ENCODE measurements at regions of chr11 and their contacts with region 1.

Region 1: DNA sequence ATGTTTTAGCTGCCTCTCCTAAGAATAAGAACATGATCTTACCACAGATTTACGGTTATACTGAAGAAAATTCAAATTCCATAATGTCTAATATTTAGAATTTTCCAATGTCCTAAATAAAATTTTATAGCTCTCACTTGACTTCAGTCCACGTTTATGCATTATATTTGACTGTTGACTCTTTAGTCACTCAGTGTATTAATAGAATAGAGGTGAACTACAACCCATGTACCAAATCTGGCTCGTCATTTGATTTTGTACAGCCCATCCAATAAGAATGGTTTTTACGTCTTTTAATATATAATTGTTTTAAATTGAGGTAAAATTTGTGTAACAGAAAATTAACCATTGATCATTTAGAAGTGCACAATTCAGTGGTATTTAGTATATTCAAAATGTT is 34.9 kb downstream of the KDM2A start:
- DNase-seq: no peak
- H3K4me3 ChIP-seq: no peak overlapping the region
- H3K4me3 Mint-ChIP-seq: no peak overlapping the region
- H3K27ac ChIP-seq: no peak overlapping the region
- H3K27ac Mint-ChIP-seq: peak overlapping the region in 1 of 8 donors; percentile 66
- H3K4me1 ChIP-seq: no peaks in the 10 kb centered on the region
- H3K4me1 Mint-ChIP-seq: peaks cover 16 to 27% (median 18%) of the 10 kb centered on the region in 3 donors
- H3K27me3 ChIP-seq: no peaks in the 10 kb centered on the region
- H3K27me3 Mint-ChIP-seq: no peaks in the 10 kb centered on the region

Region 2: DNA sequence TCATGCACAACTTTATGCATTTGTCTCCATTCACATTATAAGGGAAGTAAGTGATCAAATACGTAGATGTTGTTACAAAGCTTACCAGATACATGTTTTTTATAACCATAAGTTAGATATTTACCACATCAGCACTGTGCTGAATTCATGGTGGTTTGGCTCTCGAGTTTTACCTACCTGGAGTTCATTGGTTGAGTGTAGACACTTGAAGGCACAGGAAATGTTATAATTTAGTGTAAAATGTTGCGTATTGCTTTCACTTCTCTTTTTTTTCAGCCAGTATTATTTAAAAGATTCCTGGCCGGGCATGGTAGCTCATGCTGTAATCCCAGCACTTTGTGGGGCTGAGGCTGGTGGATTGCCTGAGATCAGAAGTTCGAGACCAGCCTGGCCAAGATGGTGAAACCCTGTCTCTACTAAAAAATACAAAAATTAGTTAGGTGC is 59.2 kb after region 1 on chr11:
- CTCF ChIA-PET with region 1: no interaction called
- POLR2A ChIA-PET with region 1: interaction called, 16 read pairs
- DNase-seq: peak in 1 of 5 donors; percentile 35
- H3K4me3 ChIP-seq: no peak overlapping the region
- H3K4me3 Mint-ChIP-seq: peak overlapping the region in 1 of 7 donors; percentile 13
- H3K27ac ChIP-seq: no peak overlapping the region
- H3K27ac Mint-ChIP-seq: peak overlapping the region in 2 of 8 donors; percentile 29 to 30
- H3K4me1 ChIP-seq: no peaks in the 10 kb centered on the region
- H3K4me1 Mint-ChIP-seq: peaks cover 3 to 7% (median 5%) of the 10 kb centered on the region in 3 donors
- H3K27me3 ChIP-seq: no peaks in the 10 kb centered on the region
- H3K27me3 Mint-ChIP-seq: no peaks in the 10 kb centered on the region

Region 3: DNA sequence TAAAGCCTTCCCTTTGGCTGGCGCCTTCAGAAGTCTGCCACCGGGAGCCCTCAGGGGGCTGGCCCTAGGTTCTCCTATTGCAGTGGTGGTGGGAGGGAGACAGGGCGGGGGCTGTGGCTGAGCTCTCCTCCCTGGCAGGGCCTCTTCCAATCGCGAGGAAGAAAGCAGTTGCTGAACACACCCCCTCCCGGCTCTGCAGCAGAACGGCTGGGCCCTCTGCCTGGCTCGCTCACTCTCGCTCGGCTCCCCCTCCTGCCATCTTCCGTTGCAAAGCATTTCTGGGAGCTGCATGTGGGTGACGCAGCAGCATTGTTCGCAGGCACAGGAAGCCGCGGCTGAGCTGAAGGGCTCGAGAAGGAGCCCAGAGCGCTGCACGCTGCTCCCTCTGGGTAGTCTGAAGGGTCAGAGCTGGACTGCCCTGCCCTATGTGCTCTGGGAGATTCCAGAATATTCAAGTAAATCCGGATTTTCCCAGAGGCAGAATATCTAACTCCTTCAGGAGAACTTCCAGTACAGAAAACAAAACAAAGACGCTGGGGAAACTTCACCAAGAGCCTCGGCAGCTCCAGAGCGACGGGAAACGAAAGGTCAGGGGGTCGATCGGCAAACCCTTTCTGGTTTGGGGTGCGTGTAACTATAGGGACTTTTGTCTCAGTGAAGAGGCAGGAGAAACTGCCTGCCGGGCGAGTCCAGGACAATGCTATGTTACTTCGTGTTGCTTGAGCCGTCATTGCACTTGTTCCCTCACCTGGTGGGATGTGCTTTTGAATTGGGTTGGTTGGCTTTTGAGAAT is 86.0 kb after region 1 on chr11:
- CTCF ChIA-PET with region 1: no interaction called
- POLR2A ChIA-PET with region 1: no interaction called
- DNase-seq: peak; percentile 94 to 98 (median 97)
- H3K4me3 ChIP-seq: peak overlapping the region; percentile 98
- H3K4me3 Mint-ChIP-seq: peak overlapping the region; percentile 94 to 100 (median 99)
- H3K27ac ChIP-seq: peak overlapping the region; percentile 99
- H3K27ac Mint-ChIP-seq: peak overlapping the region; percentile 97 to 100 (median 99)
- H3K4me1 ChIP-seq: peaks cover 48% of the 10 kb centered on the region
- H3K4me1 Mint-ChIP-seq: peaks cover 50 to 58% (median 57%) of the 10 kb centered on the region in 3 donors
- H3K27me3 ChIP-seq: no peaks in the 10 kb centered on the region
- H3K27me3 Mint-ChIP-seq: peaks cover 0 to 4% of the 10 kb centered on the region in 2 donors